ENCODE measurements at regions of chr20 and their contacts with region 1.

Region 1: GRCh38 chr20:53828682-53829254 is 235.1 kb upstream of the ZNF217 start:
- DNase-seq: peak; percentile 93
- ATAC-seq: peak; percentile 77
- H3K4me3 ChIP-seq: peak overlapping the region; percentile 61
- H3K27ac ChIP-seq: peak overlapping the region; percentile 93
- H3K4me1 ChIP-seq: peaks cover 49% of the 10 kb centered on the region
- H3K27me3 ChIP-seq: no peaks in the 10 kb centered on the region
- CTCF ChIP-seq: peak; percentile 62

Region 2: GRCh38 chr20:53578492-53579222 is 250.1 kb before region 1 on chr20:
- CTCF ChIA-PET with region 1: no interaction called
- POLR2A ChIA-PET with region 1: interaction called, 11 read pairs
- intact Hi-C with region 1: loop called (anchors 1 kb)
- DNase-seq: peak; percentile 100
- ATAC-seq: peak; percentile 12
- H3K4me3 ChIP-seq: peak overlapping the region; percentile 75
- H3K27ac ChIP-seq: peak overlapping the region; percentile 88
- H3K4me1 ChIP-seq: peaks cover 59% of the 10 kb centered on the region
- H3K27me3 ChIP-seq: no peaks in the 10 kb centered on the region
- CTCF ChIP-seq: peak; percentile 99

Region 3: DNA sequence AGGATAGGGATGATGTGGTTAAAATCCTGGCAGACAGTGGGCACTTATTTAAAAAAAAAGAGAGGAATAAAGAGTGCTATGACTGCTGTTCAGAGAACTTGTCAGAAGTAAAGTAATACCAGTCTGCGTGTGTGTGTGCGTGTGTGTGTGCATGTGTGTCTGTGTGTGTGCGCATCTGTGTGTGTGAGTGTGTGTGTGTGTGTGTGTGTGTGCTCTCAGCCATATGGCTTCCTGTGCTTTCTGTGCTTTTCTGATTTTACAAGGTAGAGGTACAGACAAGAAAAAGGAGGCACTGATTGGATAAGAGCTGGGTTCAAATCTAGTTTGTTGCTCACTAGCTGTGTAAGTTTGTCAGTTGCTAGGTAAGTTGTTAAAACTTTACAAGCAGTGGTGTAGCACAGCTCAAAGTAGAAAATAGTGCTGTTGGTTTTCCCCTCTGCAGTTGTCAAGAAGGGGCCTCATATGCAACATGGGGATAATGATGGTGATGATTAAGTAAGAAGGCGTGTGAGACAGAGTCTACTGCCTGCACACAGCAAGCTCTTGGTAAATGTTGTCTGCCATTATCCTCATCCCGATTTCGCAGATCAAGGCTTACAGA is 79.8 kb before region 1 on chr20:
- CTCF ChIA-PET with region 1: no interaction called
- POLR2A ChIA-PET with region 1: interaction called, 10 read pairs
- intact Hi-C with region 1: loop called (anchors 1 kb)
- DNase-seq: peak; percentile 58
- ATAC-seq: no peak
- H3K4me3 ChIP-seq: no peak overlapping the region
- H3K27ac ChIP-seq: peak overlapping the region; percentile 47
- H3K4me1 ChIP-seq: peaks cover 56% of the 10 kb centered on the region
- H3K27me3 ChIP-seq: no peaks in the 10 kb centered on the region
- CTCF ChIP-seq: no peak

Region 4: GRCh38 chr20:53786445-53787267 is 42.1 kb before region 1 on chr20:
- CTCF ChIA-PET with region 1: no interaction called
- POLR2A ChIA-PET with region 1: interaction called, 8 read pairs
- intact Hi-C with region 1: loop called (anchors 1 kb)
- DNase-seq: peak; percentile 71
- ATAC-seq: peak; percentile 46
- H3K4me3 ChIP-seq: peak overlapping the region; percentile 27
- H3K27ac ChIP-seq: peak overlapping the region; percentile 87
- H3K4me1 ChIP-seq: peaks cover 58% of the 10 kb centered on the region
- H3K27me3 ChIP-seq: no peaks in the 10 kb centered on the region
- CTCF ChIP-seq: peak; percentile 39

Region 5: GRCh38 chr20:53839423-53840176 is 10.8 kb after region 1 on chr20:
- CTCF ChIA-PET with region 1: no interaction called
- POLR2A ChIA-PET with region 1: no interaction called
- intact Hi-C with region 1: no loop called
- DNase-seq: peak; percentile 43
- ATAC-seq: peak; percentile 50
- H3K4me3 ChIP-seq: no peak overlapping the region
- H3K27ac ChIP-seq: no peak overlapping the region
- H3K4me1 ChIP-seq: peaks cover 17% of the 10 kb centered on the region
- H3K27me3 ChIP-seq: no peaks in the 10 kb centered on the region
- CTCF ChIP-seq: no peak

Region 6: DNA sequence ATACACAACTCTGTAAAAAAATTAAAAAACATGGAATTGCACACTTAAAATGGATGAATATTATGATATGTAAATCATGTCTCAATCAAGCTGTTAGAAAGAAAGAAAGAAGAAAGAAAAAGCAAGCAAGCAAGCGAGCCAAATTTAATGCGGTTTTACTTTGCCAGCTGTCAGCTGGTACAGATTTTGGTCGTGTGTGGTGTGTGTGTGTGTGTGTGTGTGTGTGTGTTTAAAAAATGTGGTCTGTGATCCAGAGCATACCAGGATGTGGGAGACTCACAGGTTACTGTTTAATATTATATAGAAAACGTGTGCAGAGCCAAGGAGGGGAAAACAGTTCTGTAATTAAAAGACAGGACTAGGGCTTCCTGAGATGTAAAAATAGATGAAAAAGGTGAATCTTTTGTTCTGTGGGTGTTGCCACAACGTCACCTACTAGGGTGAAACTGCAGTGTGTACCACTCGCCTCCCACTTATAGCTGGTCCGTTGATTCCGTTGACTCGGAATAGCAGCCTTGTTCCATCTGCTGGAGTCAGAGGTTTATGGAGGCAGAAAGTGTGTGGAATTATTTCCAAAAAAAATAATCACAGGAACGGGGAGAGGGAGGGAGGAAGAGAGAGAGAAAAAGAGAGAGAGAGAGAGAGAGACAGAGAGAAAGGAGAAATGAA is 43.9 kb after region 1 on chr20:
- CTCF ChIA-PET with region 1: no interaction called
- POLR2A ChIA-PET with region 1: no interaction called
- intact Hi-C with region 1: no loop called
- DNase-seq: no peak
- ATAC-seq: no peak
- H3K4me3 ChIP-seq: no peak overlapping the region
- H3K27ac ChIP-seq: 0 out of 2 replicates have a peak overlapping the region, but pooled peaks have one; percentile 1
- H3K4me1 ChIP-seq: peaks cover 45% of the 10 kb centered on the region
- H3K27me3 ChIP-seq: no peaks in the 10 kb centered on the region
- CTCF ChIP-seq: no peak

Region 7: GRCh38 chr20:53907968-53908751 is 79.4 kb after region 1 on chr20:
- CTCF ChIA-PET with region 1: no interaction called
- POLR2A ChIA-PET with region 1: no interaction called
- intact Hi-C with region 1: loop called (anchors 2 kb)
- DNase-seq: no peak
- ATAC-seq: no peak
- H3K4me3 ChIP-seq: no peak overlapping the region
- H3K27ac ChIP-seq: peak overlapping the region; percentile 91
- H3K4me1 ChIP-seq: peaks cover 37% of the 10 kb centered on the region
- H3K27me3 ChIP-seq: no peaks in the 10 kb centered on the region
- CTCF ChIP-seq: no peak

Region 8: GRCh38 chr20:54062812-54063280 is 234.1 kb after region 1 on chr20:
- CTCF ChIA-PET with region 1: no interaction called
- POLR2A ChIA-PET with region 1: no interaction called
- intact Hi-C with region 1: loop called (anchors 10 kb)
- DNase-seq: peak; percentile 79
- ATAC-seq: peak; percentile 49
- H3K4me3 ChIP-seq: no peak overlapping the region
- H3K27ac ChIP-seq: no peak overlapping the region
- H3K4me1 ChIP-seq: peaks cover 15% of the 10 kb centered on the region
- H3K27me3 ChIP-seq: no peaks in the 10 kb centered on the region
- CTCF ChIP-seq: peak; percentile 95

Region 9: GRCh38 chr20:54107600-54108416 is 279.0 kb after region 1 on chr20:
- CTCF ChIA-PET with region 1: no interaction called
- POLR2A ChIA-PET with region 1: no interaction called
- intact Hi-C with region 1: no loop called
- DNase-seq: peak; percentile 26
- ATAC-seq: peak; percentile 26; the same call in 1 of the 2 replicates
- H3K4me3 ChIP-seq: no peak overlapping the region
- H3K27ac ChIP-seq: no peak overlapping the region
- H3K4me1 ChIP-seq: no peaks in the 10 kb centered on the region
- H3K27me3 ChIP-seq: no peaks in the 10 kb centered on the region
- CTCF ChIP-seq: no peak

Measured in PC-3 (cell line).